CD14-positive monocyte (primary cell): ENCODE measurements at regions of chr4 and their contacts with region 1.

Region 1: DNA sequence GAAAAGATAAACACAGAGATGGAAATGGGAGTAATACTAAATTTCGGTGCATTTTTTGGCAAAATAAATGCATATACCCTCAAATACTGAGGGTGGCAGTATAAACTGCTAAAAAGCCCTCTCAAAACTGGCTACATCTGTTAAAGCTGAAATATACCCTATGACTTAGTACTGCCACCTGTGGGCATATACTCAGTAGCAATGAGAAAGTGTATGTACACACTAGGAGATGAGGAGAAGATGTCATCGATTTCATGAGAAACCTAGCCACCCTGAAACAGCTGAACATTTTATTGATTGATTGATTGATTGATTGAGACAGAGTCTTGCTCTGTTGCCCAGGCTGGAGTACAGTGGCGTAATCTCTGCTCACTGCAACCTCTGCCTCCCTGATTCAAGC is 12.2 kb upstream of the TMEM128 start:
- DNase-seq: peak; percentile 59 to 71 (median 64)
- H3K4me3 ChIP-seq: no peak overlapping the region
- H3K4me3 Mint-ChIP-seq: no peak overlapping the region
- H3K27ac ChIP-seq: no peak overlapping the region
- H3K27ac Mint-ChIP-seq: peak overlapping the region in 2 of 7 donors; percentile 43 to 45
- H3K4me1 ChIP-seq: no peaks in the 10 kb centered on the region
- H3K4me1 Mint-ChIP-seq: peaks cover 3% of the 10 kb centered on the region
- H3K27me3 ChIP-seq: no peaks in the 10 kb centered on the region
- H3K27me3 Mint-ChIP-seq: peaks cover 4 to 13% (median 12%) of the 10 kb centered on the region in 3 donors
- CTCF ChIP-seq: peak; percentile 68

Region 2: GRCh38 chr4:3703677-3704521 is 556.4 kb before region 1 on chr4:
- intact Hi-C with region 1: no loop called
- DNase-seq: no peak
- H3K4me3 ChIP-seq: no peak overlapping the region
- H3K4me3 Mint-ChIP-seq: no peak overlapping the region
- H3K27ac ChIP-seq: no peak overlapping the region
- H3K27ac Mint-ChIP-seq: no peak overlapping the region
- H3K4me1 ChIP-seq: peaks cover 16% of the 10 kb centered on the region in 2 donors
- H3K4me1 Mint-ChIP-seq: peaks cover 17% of the 10 kb centered on the region
- H3K27me3 ChIP-seq: peaks cover 0 to 18% of the 10 kb centered on the region in 2 donors
- H3K27me3 Mint-ChIP-seq: peaks cover 4 to 37% (median 18%) of the 10 kb centered on the region in 3 donors
- CTCF ChIP-seq: no peak

Region 3: GRCh38 chr4:4206204-4206603 is 54.0 kb before region 1 on chr4:
- intact Hi-C with region 1: no loop called
- DNase-seq: no peak
- H3K4me3 ChIP-seq: no peak overlapping the region
- H3K4me3 Mint-ChIP-seq: no peak overlapping the region
- H3K27ac ChIP-seq: no peak overlapping the region
- H3K27ac Mint-ChIP-seq: no peak overlapping the region
- H3K4me1 ChIP-seq: no peaks in the 10 kb centered on the region
- H3K4me1 Mint-ChIP-seq: no peaks in the 10 kb centered on the region
- H3K27me3 ChIP-seq: peaks cover 6 to 14% of the 10 kb centered on the region in 2 donors
- H3K27me3 Mint-ChIP-seq: peaks cover 14 to 31% (median 26%) of the 10 kb centered on the region in 3 donors
- CTCF ChIP-seq: no peak

Region 4: GRCh38 chr4:4308800-4309441 is 48.7 kb after region 1 on chr4:
- intact Hi-C with region 1: no loop called
- DNase-seq: no peak
- H3K4me3 ChIP-seq: no peak overlapping the region
- H3K4me3 Mint-ChIP-seq: no peak overlapping the region
- H3K27ac ChIP-seq: no peak overlapping the region
- H3K27ac Mint-ChIP-seq: no peak overlapping the region
- H3K4me1 ChIP-seq: no peaks in the 10 kb centered on the region
- H3K4me1 Mint-ChIP-seq: no peaks in the 10 kb centered on the region
- H3K27me3 ChIP-seq: no peaks in the 10 kb centered on the region
- H3K27me3 Mint-ChIP-seq: no peaks in the 10 kb centered on the region
- CTCF ChIP-seq: no peak

Region 5: GRCh38 chr4:4334798-4335520 is 74.7 kb after region 1 on chr4:
- intact Hi-C with region 1: loop called (anchors 2 kb)
- DNase-seq: peak; percentile 28 to 54 (median 48)
- H3K4me3 ChIP-seq: no peak overlapping the region
- H3K4me3 Mint-ChIP-seq: no peak overlapping the region
- H3K27ac ChIP-seq: no peak overlapping the region
- H3K27ac Mint-ChIP-seq: peak overlapping the region in 1 of 7 donors; percentile 3
- H3K4me1 ChIP-seq: no peaks in the 10 kb centered on the region
- H3K4me1 Mint-ChIP-seq: peaks cover 2% of the 10 kb centered on the region
- H3K27me3 ChIP-seq: no peaks in the 10 kb centered on the region
- H3K27me3 Mint-ChIP-seq: peaks cover 2 to 14% (median 5%) of the 10 kb centered on the region in 3 donors
- CTCF ChIP-seq: peak; percentile 87

Region 6: GRCh38 chr4:4356106-4357041 is 96.1 kb after region 1 on chr4:
- intact Hi-C with region 1: no loop called
- DNase-seq: no peak
- H3K4me3 ChIP-seq: no peak overlapping the region
- H3K4me3 Mint-ChIP-seq: no peak overlapping the region
- H3K27ac ChIP-seq: no peak overlapping the region
- H3K27ac Mint-ChIP-seq: peak overlapping the region in 1 of 7 donors; percentile 26
- H3K4me1 ChIP-seq: no peaks in the 10 kb centered on the region
- H3K4me1 Mint-ChIP-seq: no peaks in the 10 kb centered on the region
- H3K27me3 ChIP-seq: peaks cover 0 to 6% of the 10 kb centered on the region in 2 donors
- H3K27me3 Mint-ChIP-seq: peaks cover 2 to 19% (median 15%) of the 10 kb centered on the region in 3 donors
- CTCF ChIP-seq: no peak

Region 7: GRCh38 chr4:4430492-4431197 is 170.4 kb after region 1 on chr4:
- intact Hi-C with region 1: loop called in 1 of 2 experiments (anchors 5 kb)
- DNase-seq: no peak
- H3K4me3 ChIP-seq: no peak overlapping the region
- H3K4me3 Mint-ChIP-seq: no peak overlapping the region
- H3K27ac ChIP-seq: no peak overlapping the region
- H3K27ac Mint-ChIP-seq: no peak overlapping the region
- H3K4me1 ChIP-seq: no peaks in the 10 kb centered on the region
- H3K4me1 Mint-ChIP-seq: no peaks in the 10 kb centered on the region
- H3K27me3 ChIP-seq: no peaks in the 10 kb centered on the region
- H3K27me3 Mint-ChIP-seq: no peaks in the 10 kb centered on the region
- CTCF ChIP-seq: peak; percentile 30